H1 (cell line): ENCODE measurements at regions of chr2 and their contacts with region 1.

Region 1: DNA sequence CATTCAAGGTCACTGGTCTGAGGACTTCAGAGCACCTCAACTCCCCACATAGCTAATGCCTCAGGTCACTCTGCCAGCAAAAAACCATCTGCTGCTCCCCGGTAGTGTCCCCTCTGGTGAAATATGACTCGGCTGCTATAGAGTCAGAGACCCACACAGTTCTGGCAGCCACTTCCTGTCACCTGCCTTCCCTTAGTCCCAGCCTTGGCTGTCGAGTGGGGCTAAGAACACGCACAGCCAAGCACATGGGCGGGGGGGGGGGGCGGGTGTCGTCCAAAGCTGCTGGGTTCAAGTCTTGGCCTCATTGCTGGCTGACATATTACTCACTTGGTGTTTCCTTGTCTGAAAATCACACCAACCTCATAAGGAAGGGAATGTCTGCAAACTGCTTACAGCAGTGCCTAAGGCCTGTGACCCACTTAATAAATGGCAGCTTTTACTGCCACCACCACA is 37.5 kb downstream of the POLR1A start:
- DNase-seq: no peak
- H3K4me3 ChIP-seq: no peak overlapping the region
- H3K27ac ChIP-seq: no peak overlapping the region
- H3K4me1 ChIP-seq: no peaks in the 10 kb centered on the region
- H3K27me3 ChIP-seq: no peaks in the 10 kb centered on the region
- CTCF ChIP-seq: no peak
- EP300 ChIP-seq: no peak
- POLR2A ChIP-seq: no peak
- RAD21 ChIP-seq: no peak

Region 2: DNA sequence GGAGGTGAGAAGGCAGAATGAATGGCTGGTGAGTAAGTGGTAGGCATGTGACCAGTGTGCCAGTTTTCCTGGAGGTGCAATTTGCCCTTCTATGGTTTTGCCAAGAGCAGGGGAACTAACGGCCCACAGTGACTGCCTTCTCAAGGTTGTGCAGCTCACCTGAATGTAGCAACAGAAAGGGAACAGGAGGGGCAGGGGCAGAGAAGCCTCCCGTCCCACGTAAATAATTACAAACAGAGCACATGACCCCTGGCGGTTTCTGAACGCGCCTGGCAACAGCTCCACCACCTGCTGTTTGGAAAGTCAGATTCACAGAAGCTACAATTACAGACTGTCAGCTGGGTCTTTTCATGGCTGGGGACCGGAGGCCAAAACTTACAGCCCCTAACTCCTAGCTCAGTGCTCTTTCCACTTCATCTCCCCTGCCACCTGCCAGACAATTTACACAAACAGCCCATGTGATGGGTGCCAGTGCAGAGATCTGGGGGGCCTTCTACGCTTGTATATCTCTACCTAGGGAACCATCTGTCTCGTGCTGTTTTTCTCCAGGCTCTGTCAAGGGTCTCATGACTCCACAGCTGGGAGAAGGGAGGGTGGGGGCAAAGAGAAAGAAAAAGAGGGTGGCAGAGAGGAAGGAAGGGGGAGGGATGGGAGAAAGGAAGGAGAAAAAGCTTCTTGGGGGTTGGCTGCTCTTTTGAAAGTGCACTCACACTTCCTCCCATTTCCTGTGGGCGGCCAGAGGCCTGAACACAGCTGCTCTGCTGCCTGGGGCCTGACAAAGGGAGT is 32.1 kb before region 1 on chr2:
- CTCF ChIA-PET with region 1: no interaction called
- POLR2A ChIA-PET with region 1: no interaction called
- DNase-seq: no peak
- H3K4me3 ChIP-seq: no peak overlapping the region
- H3K27ac ChIP-seq: no peak overlapping the region
- H3K4me1 ChIP-seq: no peaks in the 10 kb centered on the region; a peak in 1 of 7 replicates
- H3K27me3 ChIP-seq: no peaks in the 10 kb centered on the region
- CTCF ChIP-seq: no peak
- EP300 ChIP-seq: no peak
- POLR2A ChIP-seq: no peak
- RAD21 ChIP-seq: peak in 1 of 2 experiments; percentile 4; a peak in 1 of 4 replicates

Region 3: DNA sequence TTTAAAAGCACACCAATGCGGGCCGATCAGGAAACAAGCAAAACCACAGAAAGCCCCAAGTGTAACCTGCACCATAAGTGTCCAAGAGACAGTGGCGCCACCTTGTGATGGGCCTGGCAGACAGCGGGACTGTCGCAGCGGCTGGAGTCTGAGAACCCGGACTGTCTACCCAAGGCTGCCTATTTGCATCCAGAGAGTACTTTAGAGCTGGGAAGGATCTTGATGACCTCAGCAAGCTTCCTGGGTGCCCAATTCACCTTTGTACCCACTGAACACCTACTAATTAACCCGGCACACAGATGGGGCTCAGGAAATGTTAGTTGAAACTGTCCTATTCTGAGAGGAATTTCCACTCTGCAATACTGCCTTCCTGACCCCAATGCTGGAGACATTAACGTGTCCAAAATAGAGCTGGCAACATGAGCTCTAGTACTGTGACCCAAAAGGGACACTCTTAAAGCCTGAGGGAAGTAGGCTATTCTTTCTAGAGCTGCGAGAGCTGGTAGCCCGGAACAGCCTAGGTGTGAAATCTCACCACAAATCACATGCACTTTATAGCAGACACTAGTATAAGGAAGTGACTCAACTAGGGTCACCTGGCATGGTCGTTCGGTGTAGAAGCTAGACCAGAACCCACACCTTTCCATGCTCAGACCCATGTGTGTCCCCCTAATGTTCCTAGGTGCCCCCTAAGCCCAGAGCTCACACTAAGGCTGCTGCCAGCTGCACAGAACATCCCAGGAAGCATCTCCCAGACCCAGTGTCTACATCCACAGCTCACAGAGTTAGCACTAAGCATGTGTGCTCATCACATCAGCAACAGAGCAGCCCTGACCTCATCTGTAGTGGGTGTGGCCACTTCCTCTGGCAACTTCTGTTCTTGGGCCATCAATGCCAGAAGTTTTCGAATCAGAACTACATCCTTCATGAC is 12.1 kb after region 1 on chr2:
- CTCF ChIA-PET with region 1: interaction called, 27 read pairs
- POLR2A ChIA-PET with region 1: interaction called, 3 read pairs
- DNase-seq: peak; percentile 21 to 88
- H3K4me3 ChIP-seq: no peak overlapping the region
- H3K27ac ChIP-seq: no peak overlapping the region
- H3K4me1 ChIP-seq: no peaks in the 10 kb centered on the region
- H3K27me3 ChIP-seq: no peaks in the 10 kb centered on the region
- CTCF ChIP-seq: peak; percentile 76 to 92 (median 84)
- EP300 ChIP-seq: no peak
- POLR2A ChIP-seq: no peak
- RAD21 ChIP-seq: peak; percentile 62 to 65